Astrocyte of the cerebellum (primary cell): ENCODE measurements at regions of chr9 and their contacts with region 1.

Region 1: GRCh38 chr9:135308821-135309762 is 170.5 kb upstream of the PPP1R26 start:
- DNase-seq: no peak
- H3K4me3 ChIP-seq: no peak overlapping the region
- CTCF ChIP-seq: no peak

Region 2: DNA sequence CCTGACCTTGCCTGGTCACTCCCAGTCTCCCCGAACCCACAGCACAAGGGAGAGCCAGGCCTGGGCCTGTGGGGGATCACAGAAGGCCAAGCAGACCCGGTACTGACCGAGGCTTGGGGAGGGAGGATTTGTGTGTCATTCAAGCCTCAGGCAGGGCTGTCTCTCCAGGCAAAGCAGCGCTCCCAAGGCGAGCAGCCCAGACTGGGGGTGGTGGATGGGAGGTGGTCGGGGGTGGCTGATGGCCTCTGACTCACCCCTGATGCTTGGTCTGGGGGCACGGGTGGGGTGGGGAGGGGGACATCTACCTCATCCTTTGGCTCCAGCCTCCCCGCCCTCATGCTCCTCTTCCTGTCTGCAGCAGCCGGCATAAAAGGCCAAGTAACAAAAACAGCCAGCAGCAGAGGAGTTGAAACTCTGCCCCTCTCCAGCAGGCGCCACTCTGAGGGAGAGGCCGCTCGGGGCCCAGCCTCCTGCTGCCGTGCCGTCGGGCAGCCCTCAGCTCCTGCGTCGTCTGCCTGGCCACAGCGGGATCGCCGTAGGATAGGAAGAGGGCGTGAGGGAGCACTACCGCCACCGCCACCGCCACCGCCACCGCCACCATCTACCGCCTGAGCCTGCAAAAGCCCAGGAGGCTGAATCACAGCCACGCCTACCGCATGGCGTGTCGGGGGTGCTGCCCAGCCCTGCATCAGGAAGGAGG is 55.6 kb before region 1 on chr9:
- in situ Hi-C with region 1: loop called (anchors 5 kb)
- DNase-seq: no peak
- H3K4me3 ChIP-seq: no peak overlapping the region
- CTCF ChIP-seq: no peak

Region 3: DNA sequence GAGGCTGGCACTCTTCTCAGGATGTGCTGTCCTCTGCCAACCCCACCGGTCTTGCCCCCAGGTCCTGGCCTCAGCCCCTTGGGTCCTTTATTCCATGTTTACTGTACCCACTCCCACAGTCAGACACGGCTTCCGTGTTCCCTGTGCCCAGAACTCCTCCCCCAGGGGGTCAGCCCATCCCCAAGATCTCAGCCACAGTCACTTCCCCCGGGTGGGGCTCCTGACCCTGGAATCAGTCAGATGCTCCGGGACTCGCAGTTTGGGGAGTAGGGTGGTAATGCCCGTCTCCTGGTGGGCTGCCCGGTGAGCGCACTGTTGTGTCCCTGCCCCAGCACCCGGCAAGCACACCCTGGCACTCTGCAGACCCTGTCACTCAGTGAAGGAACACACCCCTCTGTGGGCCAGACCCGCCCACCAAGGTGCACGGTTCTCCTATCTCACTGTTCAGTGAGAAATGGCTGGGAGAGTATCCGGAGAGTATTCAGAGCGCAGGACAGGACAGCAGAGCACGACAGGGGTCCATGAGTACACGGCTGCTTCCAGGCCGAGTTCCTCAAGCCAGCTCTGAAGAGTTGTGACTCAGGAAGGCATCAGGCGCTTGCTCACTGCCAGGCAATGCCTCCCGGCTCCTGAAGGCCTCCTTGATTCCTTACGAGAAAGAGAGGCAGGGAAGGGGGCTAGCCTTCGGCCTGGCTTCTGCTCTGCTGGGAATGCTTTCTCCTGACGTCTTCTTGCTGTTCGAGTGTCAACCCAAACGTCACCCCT is 38.2 kb after region 1 on chr9:
- in situ Hi-C with region 1: loop called (anchors 5 kb)
- DNase-seq: no peak
- H3K4me3 ChIP-seq: no peak overlapping the region
- CTCF ChIP-seq: no peak

Region 4: GRCh38 chr9:135369416-135369990 is 60.4 kb after region 1 on chr9:
- in situ Hi-C with region 1: loop called (anchors 5 kb)
- DNase-seq: no peak
- H3K4me3 ChIP-seq: no peak overlapping the region
- CTCF ChIP-seq: no peak

Region 5: GRCh38 chr9:135395328-135395725 is 86.2 kb after region 1 on chr9:
- in situ Hi-C with region 1: no loop called
- DNase-seq: no peak
- H3K4me3 ChIP-seq: no peak overlapping the region
- CTCF ChIP-seq: no peak